Activated CD4-positive, alpha-beta T cell treated with anti-CD3 and anti-CD28 coated beads for 36 hours (primary cell): ENCODE measurements at regions of chr1 and their contacts with region 1.

Region 1: GRCh38 chr1:202462342-202463076 is 114.0 kb downstream of the PPP1R12B start:
- DNase-seq: no peak
- ATAC-seq: no peak
- H3K4me3 Mint-ChIP-seq: no peak overlapping the region
- H3K27ac Mint-ChIP-seq: no peak overlapping the region
- H3K4me1 Mint-ChIP-seq: no peaks in the 10 kb centered on the region
- H3K27me3 Mint-ChIP-seq: no peaks in the 10 kb centered on the region

Region 2: GRCh38 chr1:202565890-202566602 is 103.5 kb after region 1 on chr1:
- CTCF ChIA-PET with region 1: interaction called, 5 read pairs
- POLR2A ChIA-PET with region 1: no interaction called
- intact Hi-C with region 1: loop called in 1 of 2 experiments (anchors 5 kb)
- DNase-seq: peak; percentile 10
- ATAC-seq: peak; percentile 72
- H3K4me3 Mint-ChIP-seq: no peak overlapping the region
- H3K27ac Mint-ChIP-seq: no peak overlapping the region
- H3K4me1 Mint-ChIP-seq: peaks cover 5% of the 10 kb centered on the region
- H3K27me3 Mint-ChIP-seq: no peaks in the 10 kb centered on the region

Region 3: DNA sequence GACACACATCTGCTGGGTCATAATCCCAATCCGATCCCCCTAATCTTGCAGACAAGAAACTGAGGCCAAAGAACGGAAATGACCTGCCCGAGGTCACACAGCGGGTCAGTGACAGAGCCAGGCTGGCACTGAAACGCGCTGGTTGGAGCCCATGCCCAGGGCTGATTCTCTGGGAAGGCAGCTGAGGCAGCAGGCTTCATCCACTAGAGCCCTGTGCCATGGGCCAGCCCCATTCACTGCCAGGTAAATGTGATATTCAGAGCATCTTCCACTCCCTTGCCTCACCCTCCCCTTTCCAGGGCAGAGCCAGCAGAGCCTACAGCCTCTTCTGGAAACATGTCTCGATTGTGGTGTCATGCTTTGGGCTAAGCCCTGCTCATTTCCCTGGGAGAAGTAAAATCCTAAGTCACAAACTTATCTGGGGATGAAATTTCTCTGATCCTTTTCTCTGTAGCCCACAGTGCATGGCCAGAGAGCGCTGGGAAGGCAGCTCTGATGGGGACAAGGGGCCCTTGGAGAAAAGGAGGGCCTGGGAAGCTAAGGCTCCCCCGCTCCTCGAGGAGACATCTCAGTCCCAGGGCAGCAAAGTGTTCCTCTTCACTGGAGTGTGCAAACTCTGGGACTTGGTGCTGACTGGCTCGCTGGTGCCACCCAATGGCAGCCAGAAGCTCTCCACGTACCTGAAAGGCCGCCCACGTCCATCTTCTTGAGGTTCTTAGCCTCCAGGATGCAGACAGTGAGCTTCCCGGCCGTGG is 137.3 kb after region 1 on chr1:
- CTCF ChIA-PET with region 1: interaction called, 3 read pairs
- POLR2A ChIA-PET with region 1: no interaction called
- intact Hi-C with region 1: loop called in 1 of 2 experiments (anchors 10 kb)
- DNase-seq: peak; percentile 73
- ATAC-seq: peak; percentile 77
- H3K4me3 Mint-ChIP-seq: no peak overlapping the region
- H3K27ac Mint-ChIP-seq: no peak overlapping the region
- H3K4me1 Mint-ChIP-seq: no peaks in the 10 kb centered on the region
- H3K27me3 Mint-ChIP-seq: no peaks in the 10 kb centered on the region

Region 4: GRCh38 chr1:202625416-202626360 is 163.2 kb after region 1 on chr1:
- CTCF ChIA-PET with region 1: no interaction called
- POLR2A ChIA-PET with region 1: no interaction called
- intact Hi-C with region 1: loop called in 1 of 2 experiments (anchors 5 kb)
- DNase-seq: peak; percentile 82
- ATAC-seq: peak; percentile 82
- H3K4me3 Mint-ChIP-seq: no peak overlapping the region
- H3K27ac Mint-ChIP-seq: no peak overlapping the region
- H3K4me1 Mint-ChIP-seq: peaks cover 27% of the 10 kb centered on the region
- H3K27me3 Mint-ChIP-seq: peaks cover 5% of the 10 kb centered on the region